ENCODE measurements at regions of chr11 and their contacts with region 1.

Region 1: GRCh38 chr11:73141848-73142286 is 251 bp downstream of the FCHSD2 start:
- DNase-seq: peak; percentile 13
- ATAC-seq: peak; percentile 65
- H3K4me3 ChIP-seq: peak overlapping the region; percentile 84 to 86
- H3K27ac ChIP-seq: peak overlapping the region; percentile 88
- H3K4me1 ChIP-seq: peaks cover 8 to 22% of the 10 kb centered on the region in 2 experiments; a peak in 3 of 4 replicates
- H3K27me3 ChIP-seq: no peaks in the 10 kb centered on the region
- CTCF ChIP-seq: no peak
- POLR2A ChIP-seq: no peak
- RAD21 ChIP-seq: no peak

Region 2: DNA sequence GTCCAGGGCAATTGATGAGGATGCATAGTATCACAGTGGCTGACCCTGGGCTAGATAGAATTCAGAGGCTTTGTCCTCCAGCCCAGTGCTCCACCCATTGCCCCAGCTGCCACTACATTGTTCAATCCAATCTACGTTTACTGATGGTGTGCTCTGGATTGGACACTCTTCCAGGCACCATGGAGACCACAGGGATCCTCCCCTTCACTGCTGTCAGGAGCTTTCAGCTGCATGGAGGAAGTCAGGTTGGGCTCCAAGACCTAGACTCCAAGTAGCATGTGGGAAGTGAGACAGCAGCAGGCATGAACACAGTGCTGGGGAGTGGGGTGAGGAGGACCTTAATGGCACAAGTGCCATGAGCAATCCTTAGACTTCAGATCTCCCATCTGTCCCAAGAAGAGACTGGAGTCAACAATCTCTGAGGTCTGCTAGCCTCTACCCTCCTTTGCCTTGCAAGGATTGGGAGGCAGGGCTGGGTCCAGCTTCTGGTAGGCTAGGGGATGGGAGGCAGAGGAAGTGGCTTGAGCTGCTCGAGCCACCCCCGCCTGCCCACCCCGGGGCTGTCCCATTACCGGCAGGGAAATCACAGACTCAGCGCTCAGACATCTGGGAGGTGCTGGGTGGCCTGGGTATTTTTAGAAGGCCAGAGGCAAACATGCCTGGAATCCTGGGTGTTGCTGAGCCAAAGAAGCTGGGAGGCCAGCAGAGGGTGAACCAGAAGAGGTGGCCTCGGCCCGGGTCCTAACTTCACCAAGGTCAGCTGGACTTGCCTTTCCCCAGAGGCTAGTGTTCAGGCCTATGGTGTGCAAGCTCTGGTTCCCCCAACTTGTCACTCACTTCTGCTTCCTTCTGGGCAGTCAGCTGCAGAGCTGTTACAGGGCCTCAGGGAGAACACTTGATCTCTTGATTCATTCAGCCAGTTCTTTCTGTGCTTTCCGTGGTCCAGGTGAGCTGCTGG is 15.5 kb after region 1 on chr11:
- CTCF ChIA-PET with region 1: interaction called, 10 read pairs
- POLR2A ChIA-PET with region 1: interaction called, 3 read pairs
- RAD21 ChIA-PET with region 1: interaction called in 1 of 2 experiments, 5 read pairs
- intact Hi-C with region 1: no loop called
- DNase-seq: no peak
- ATAC-seq: no peak
- H3K4me3 ChIP-seq: no peak overlapping the region
- H3K27ac ChIP-seq: no peak overlapping the region
- H3K4me1 ChIP-seq: peaks cover 0 to 9% of the 10 kb centered on the region in 2 experiments; a peak in 1 of 4 replicates
- H3K27me3 ChIP-seq: no peaks in the 10 kb centered on the region
- CTCF ChIP-seq: no peak
- POLR2A ChIP-seq: no peak
- RAD21 ChIP-seq: no peak

Region 3: DNA sequence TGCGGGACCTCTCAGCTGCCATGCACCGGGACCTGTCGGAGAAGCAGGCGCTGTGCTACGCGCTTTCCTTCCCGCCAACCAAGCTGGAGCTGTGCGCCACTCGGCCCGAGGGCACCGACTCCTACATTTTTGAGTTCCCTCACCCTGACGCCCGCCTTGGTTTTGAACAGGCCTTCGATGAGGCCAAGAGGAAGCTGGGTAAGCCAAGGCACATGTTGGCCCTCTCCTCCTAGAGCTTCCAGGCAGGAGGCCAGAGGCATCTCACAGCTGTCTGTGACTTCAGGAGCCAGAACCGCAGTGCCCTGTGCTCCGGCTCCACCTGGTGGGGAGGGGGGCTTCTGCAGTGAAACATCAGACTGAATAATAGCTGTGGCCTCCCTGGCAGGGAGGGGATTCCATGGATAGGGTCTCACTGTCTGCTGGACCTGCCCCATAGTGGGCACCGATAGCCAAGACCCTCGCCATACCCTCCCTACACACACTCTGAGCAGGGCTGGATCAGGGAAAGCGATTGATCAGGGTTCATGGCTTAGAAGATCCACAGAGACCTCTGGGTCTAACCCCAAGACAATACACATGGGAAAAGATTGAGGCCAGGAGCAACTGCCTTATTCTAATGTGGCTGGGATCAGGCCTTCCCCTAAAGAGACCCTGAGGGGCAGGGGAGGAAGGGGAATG is 218.6 kb after region 1 on chr11:
- CTCF ChIA-PET with region 1: no interaction called
- POLR2A ChIA-PET with region 1: no interaction called
- RAD21 ChIA-PET with region 1: no interaction called
- intact Hi-C with region 1: no loop called
- DNase-seq: no peak
- ATAC-seq: peak; percentile 38
- H3K4me3 ChIP-seq: no peak overlapping the region
- H3K27ac ChIP-seq: no peak overlapping the region
- H3K4me1 ChIP-seq: peaks cover 0 to 14% of the 10 kb centered on the region in 2 experiments; a peak in 1 of 4 replicates
- H3K27me3 ChIP-seq: no peaks in the 10 kb centered on the region
- CTCF ChIP-seq: peak; percentile 38 to 76 (median 66); a peak in 5 of 6 replicates
- POLR2A ChIP-seq: no peak
- RAD21 ChIP-seq: peak; percentile 54

Region 4: GRCh38 chr11:73521621-73522020 is 379.8 kb after region 1 on chr11:
- CTCF ChIA-PET with region 1: no interaction called
- POLR2A ChIA-PET with region 1: no interaction called
- RAD21 ChIA-PET with region 1: no interaction called
- intact Hi-C with region 1: no loop called
- DNase-seq: peak; percentile 68
- ATAC-seq: peak; percentile 94
- H3K4me3 ChIP-seq: peak overlapping the region in 1 of 2 experiments; percentile 21; a peak in 1 of 4 replicates
- H3K27ac ChIP-seq: peak overlapping the region; percentile 68
- H3K4me1 ChIP-seq: peaks cover 20 to 26% of the 10 kb centered on the region in 2 experiments
- H3K27me3 ChIP-seq: no peaks in the 10 kb centered on the region
- CTCF ChIP-seq: no peak
- POLR2A ChIP-seq: no peak
- RAD21 ChIP-seq: no peak